Activated CD4-positive, alpha-beta memory T cell treated with anti-CD3 and anti-CD28 coated beads, Interleukin-2, amount 10 ng/mL, durations not matched to agents 7 days and 5 days (primary cell): ENCODE measurements at regions of chr4 and their contacts with region 1.

Region 1: DNA sequence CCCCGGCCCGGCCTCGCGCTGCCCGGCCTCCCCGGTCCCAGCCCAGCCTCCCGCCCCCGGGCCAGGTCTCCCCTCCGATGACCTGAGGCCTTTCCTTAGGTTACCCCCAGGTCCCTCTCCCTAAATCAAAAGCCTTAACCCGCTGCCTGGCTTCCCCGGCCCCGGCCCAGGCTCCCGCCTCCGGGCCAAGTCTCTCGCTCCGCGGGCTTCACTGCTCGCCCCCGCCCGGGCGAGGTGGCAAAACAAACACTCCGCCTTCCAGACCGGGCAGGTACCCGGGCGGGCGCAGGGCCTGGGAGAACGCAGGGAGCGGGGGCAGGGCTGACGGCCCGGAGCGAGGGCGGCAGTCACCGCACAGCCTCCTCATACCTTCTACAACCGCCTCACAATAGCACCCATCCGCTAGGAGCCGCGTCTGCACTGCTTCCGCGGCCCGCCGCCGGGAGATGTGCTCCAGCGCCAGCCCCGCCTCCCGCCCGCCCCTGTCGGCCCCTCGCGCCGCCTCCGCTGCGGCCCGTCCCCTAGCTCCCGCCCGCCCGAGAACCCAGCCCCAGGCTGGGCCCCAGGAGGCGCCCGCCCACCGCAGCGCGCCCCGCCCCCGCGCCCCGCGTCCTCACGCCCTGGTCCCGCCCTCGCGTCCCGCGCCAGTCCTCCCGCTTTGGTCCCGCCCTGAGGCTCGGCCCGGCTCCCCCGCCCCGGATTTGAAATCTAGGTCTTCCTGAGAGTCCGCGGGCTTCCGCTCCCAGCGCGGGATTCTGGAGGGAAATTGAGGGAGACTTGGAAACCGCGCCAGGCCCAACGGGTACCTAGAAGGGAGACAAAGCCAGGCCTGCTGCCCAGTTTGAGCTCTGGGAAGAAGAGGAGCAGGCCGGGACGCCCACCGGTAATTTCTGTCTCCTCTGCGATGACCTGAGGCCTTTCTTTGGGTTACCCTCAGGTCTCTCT is at the starts of genes CASP3 and PRIMPOL:
- DNase-seq: peak; percentile 97
- H3K4me3 Mint-ChIP-seq: peak within 1 kb of the TSS; percentile 91
- H3K27ac Mint-ChIP-seq: peak within 1 kb of the TSS; percentile 89
- H3K4me1 Mint-ChIP-seq: peaks cover 63% of the 10 kb centered on the region
- H3K27me3 Mint-ChIP-seq: no peaks in the 10 kb centered on the region
- total RNA-seq, gene CASP3: 71.4 to 77.1 TPM
- total RNA-seq, gene PRIMPOL: 19.2 to 23.4 TPM

Region 2: GRCh38 chr4:184417802-184418511 is 231.3 kb before region 1 on chr4:
- CTCF ChIA-PET with region 1: no interaction called
- POLR2A ChIA-PET with region 1: interaction called, 20 read pairs
- DNase-seq: peak; percentile 36
- H3K4me3 Mint-ChIP-seq: peak overlapping the region; percentile 77
- H3K27ac Mint-ChIP-seq: peak overlapping the region; percentile 98
- H3K4me1 Mint-ChIP-seq: peaks cover 92% of the 10 kb centered on the region
- H3K27me3 Mint-ChIP-seq: no peaks in the 10 kb centered on the region

Region 3: GRCh38 chr4:184538023-184538599 is 111.2 kb before region 1 on chr4:
- CTCF ChIA-PET with region 1: interaction called, 6 read pairs
- POLR2A ChIA-PET with region 1: interaction called, 36 read pairs
- DNase-seq: peak; percentile 72
- H3K4me3 Mint-ChIP-seq: peak overlapping the region; percentile 85
- H3K27ac Mint-ChIP-seq: peak overlapping the region; percentile 88
- H3K4me1 Mint-ChIP-seq: peaks cover 49% of the 10 kb centered on the region
- H3K27me3 Mint-ChIP-seq: no peaks in the 10 kb centered on the region

Region 4: DNA sequence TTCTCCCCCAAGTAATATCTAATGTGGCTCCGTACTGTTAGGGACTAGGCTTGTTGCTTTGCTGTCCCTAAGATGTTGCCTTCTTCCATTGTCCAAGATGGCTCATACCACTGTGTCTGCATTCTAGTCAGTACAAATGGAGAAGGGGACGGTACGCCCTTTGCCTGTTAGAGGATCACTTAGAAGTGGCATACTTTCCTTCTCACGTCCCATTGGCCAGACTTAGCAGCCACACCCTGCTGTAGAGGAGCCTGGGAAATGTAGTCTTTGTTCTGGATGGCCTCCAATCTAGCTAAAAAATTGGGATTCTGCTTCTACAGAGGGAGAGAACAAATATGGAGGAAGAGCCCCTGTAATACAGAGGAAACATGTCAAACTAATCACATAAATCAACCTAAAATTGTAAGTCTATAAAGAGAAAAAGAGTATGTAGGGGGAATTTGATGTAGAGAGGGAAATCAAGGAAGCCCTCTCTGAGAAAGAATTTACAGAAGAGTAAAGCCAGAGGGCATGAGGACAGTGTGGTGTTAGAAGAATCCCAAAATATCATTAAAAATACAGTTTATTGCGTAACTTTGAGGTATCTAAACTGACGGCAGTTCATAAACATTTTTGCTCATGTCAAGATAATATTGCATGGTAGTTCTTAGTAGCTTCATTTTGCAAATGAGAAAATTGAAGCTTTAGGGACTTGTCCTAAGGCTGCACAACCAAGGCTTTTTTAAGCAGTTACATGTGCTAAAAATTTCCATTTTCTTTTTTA is 15.3 kb after region 1 on chr4:
- CTCF ChIA-PET with region 1: interaction called, 17 read pairs
- POLR2A ChIA-PET with region 1: interaction called, 37 read pairs
- DNase-seq: no peak
- H3K4me3 Mint-ChIP-seq: no peak overlapping the region
- H3K27ac Mint-ChIP-seq: no peak overlapping the region
- H3K4me1 Mint-ChIP-seq: peaks cover 30% of the 10 kb centered on the region
- H3K27me3 Mint-ChIP-seq: no peaks in the 10 kb centered on the region

Region 5: GRCh38 chr4:184705692-184706091 is 56.4 kb after region 1 on chr4:
- CTCF ChIA-PET with region 1: interaction called, 4 read pairs
- POLR2A ChIA-PET with region 1: interaction called, 12 read pairs
- DNase-seq: no peak
- H3K4me3 Mint-ChIP-seq: peak overlapping the region; percentile 37
- H3K27ac Mint-ChIP-seq: peak overlapping the region; percentile 88
- H3K4me1 Mint-ChIP-seq: peaks cover 32% of the 10 kb centered on the region
- H3K27me3 Mint-ChIP-seq: no peaks in the 10 kb centered on the region

Region 6: GRCh38 chr4:184805462-184806228 is 156.3 kb after region 1 on chr4:
- CTCF ChIA-PET with region 1: no interaction called
- POLR2A ChIA-PET with region 1: no interaction called
- DNase-seq: no peak
- H3K4me3 Mint-ChIP-seq: no peak overlapping the region
- H3K27ac Mint-ChIP-seq: no peak overlapping the region
- H3K4me1 Mint-ChIP-seq: peaks cover 3% of the 10 kb centered on the region
- H3K27me3 Mint-ChIP-seq: no peaks in the 10 kb centered on the region

Region 7: GRCh38 chr4:184889666-184890335 is 240.5 kb after region 1 on chr4:
- CTCF ChIA-PET with region 1: no interaction called
- POLR2A ChIA-PET with region 1: no interaction called
- DNase-seq: no peak
- H3K4me3 Mint-ChIP-seq: no peak overlapping the region
- H3K27ac Mint-ChIP-seq: no peak overlapping the region
- H3K4me1 Mint-ChIP-seq: no peaks in the 10 kb centered on the region
- H3K27me3 Mint-ChIP-seq: peaks cover 24% of the 10 kb centered on the region